ENCODE measurements at regions of chr16 and their contacts with region 1.

Region 1: GRCh38 chr16:75801307-75801706 is 75.0 kb upstream of the CPHXL start:
- DNase-seq: no peak
- H3K4me3 ChIP-seq: no peak overlapping the region
- H3K27ac ChIP-seq: no peak overlapping the region
- H3K27me3 ChIP-seq: no peaks in the 10 kb centered on the region
- CTCF ChIP-seq: peak; percentile 39

Region 2: GRCh38 chr16:75733305-75734211 is 67.7 kb before region 1 on chr16:
- CTCF ChIA-PET with region 1: no interaction called
- POLR2A ChIA-PET with region 1: no interaction called
- DNase-seq: peak; percentile 85
- H3K4me3 ChIP-seq: peak overlapping the region; percentile 27; the same call in 1 of the 2 replicates
- H3K27ac ChIP-seq: peak overlapping the region; percentile 75
- H3K27me3 ChIP-seq: peaks cover 2% of the 10 kb centered on the region
- CTCF ChIP-seq: no peak

Region 3: GRCh38 chr16:76653390-76654026 is 852.2 kb after region 1 on chr16:
- CTCF ChIA-PET with region 1: interaction called, 21 read pairs
- POLR2A ChIA-PET with region 1: no interaction called
- DNase-seq: peak; percentile 4
- H3K4me3 ChIP-seq: no peak overlapping the region
- H3K27ac ChIP-seq: no peak overlapping the region
- H3K27me3 ChIP-seq: no peaks in the 10 kb centered on the region
- CTCF ChIP-seq: peak; percentile 73